Kidney (tissue), 22 donors: ENCODE measurements at regions of chr1 and their contacts with region 1.

Region 1: GRCh38 chr1:207828485-207829158 is 76.8 kb downstream of the CD46 start:
- DNase-seq: peak in 4 of 5 donors; percentile 72 to 87 (median 81)
- H3K4me3 ChIP-seq: no peak overlapping the region
- H3K27ac ChIP-seq: peak overlapping the region; percentile 32 to 78
- H3K4me1 ChIP-seq: peaks cover 4 to 72% (median 63%) of the 10 kb centered on the region in 3 donors
- H3K27me3 ChIP-seq: no peaks in the 10 kb centered on the region
- CTCF ChIP-seq: peak; percentile 89

Region 2: GRCh38 chr1:207779008-207779407 is 49.6 kb before region 1 on chr1:
- intact Hi-C with region 1: no loop called
- DNase-seq: no peak
- H3K4me3 ChIP-seq: no peak overlapping the region
- H3K27ac ChIP-seq: no peak overlapping the region
- H3K4me1 ChIP-seq: no peaks in the 10 kb centered on the region
- H3K27me3 ChIP-seq: no peaks in the 10 kb centered on the region
- CTCF ChIP-seq: no peak

Region 3: DNA sequence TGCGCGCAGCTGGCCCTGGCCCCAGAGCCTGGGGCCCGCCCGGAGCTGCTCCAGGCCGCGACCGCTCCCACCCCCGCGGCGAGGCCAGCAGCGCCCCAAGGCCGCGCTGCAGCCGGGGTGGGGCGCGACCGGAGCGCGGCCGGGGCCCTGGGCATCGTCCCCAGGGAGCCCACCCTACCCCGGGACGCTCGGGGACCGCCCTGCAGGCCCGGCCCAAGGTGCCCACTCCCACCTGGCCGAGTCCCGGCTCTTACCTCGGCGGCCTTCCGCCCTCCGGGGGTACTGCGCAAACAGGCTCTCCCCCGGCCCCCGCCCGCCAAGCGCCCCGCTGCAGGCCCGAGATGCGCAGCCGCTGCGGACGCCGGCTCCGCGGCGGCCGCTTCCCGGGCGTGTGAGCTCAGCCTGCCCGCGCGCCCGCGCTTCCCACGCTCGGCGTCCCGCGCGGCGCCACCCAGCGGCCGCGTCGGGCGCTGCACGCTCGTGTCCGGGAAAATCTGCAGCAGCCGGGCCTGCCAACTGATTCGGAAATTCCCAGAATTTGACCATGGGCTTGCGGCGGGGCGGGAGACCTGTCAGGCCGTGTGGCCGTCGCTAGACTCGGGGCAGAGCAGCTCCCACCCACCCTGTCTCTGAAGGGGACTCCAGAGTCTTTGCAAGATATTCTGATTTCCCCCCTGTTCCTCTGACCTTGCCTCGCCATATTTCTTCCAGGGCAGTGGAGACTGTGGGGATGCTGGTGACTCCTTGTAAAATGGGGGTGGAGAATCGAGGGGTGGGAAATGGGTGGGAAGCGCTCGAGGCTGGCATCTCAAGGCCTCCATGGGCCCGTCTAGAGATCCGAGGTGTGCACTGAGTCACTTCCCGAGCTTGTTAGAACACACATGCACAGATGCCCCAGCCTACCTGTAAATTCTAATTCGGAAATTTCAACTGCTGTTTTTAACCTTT is 40.4 kb after region 1 on chr1:
- intact Hi-C with region 1: loop called (anchors 5 kb)
- DNase-seq: peak; percentile 84 to 92 (median 89)
- H3K4me3 ChIP-seq: peak overlapping the region in 2 of 3 donors; percentile 76 to 81
- H3K27ac ChIP-seq: peak overlapping the region; percentile 93 to 97
- H3K4me1 ChIP-seq: peaks cover 0 to 28% (median 27%) of the 10 kb centered on the region in 3 donors
- H3K27me3 ChIP-seq: no peaks in the 10 kb centered on the region
- CTCF ChIP-seq: peak; percentile 99